CD4-positive, alpha-beta T cell (primary cell): ENCODE measurements at regions of chr18 and their contacts with region 1.

Region 1: GRCh38 chr18:45940724-45941123 is 26.4 kb downstream of the EPG5 start:
- DNase-seq: no peak
- ATAC-seq: no peak
- H3K4me3 ChIP-seq: no peak overlapping the region
- H3K4me3 Mint-ChIP-seq: no peak overlapping the region
- H3K27ac ChIP-seq: no peak overlapping the region
- H3K27ac Mint-ChIP-seq: no peak overlapping the region
- H3K4me1 ChIP-seq: peaks cover 11% of the 10 kb centered on the region
- H3K4me1 Mint-ChIP-seq: peaks cover 7% of the 10 kb centered on the region
- H3K27me3 ChIP-seq: no peaks in the 10 kb centered on the region
- H3K27me3 Mint-ChIP-seq: no peaks in the 10 kb centered on the region
- CTCF ChIP-seq: no peak

Region 2: GRCh38 chr18:45119876-45120275 is 820.8 kb before region 1 on chr18:
- CTCF ChIA-PET with region 1: no interaction called
- POLR2A ChIA-PET with region 1: no interaction called
- intact Hi-C with region 1: no loop called
- DNase-seq: no peak
- ATAC-seq: no peak
- H3K4me3 ChIP-seq: no peak overlapping the region
- H3K4me3 Mint-ChIP-seq: no peak overlapping the region
- H3K27ac ChIP-seq: no peak overlapping the region
- H3K27ac Mint-ChIP-seq: no peak overlapping the region
- H3K4me1 ChIP-seq: no peaks in the 10 kb centered on the region
- H3K4me1 Mint-ChIP-seq: no peaks in the 10 kb centered on the region
- H3K27me3 ChIP-seq: peaks cover 0 to 3% of the 10 kb centered on the region in 2 experiments
- H3K27me3 Mint-ChIP-seq: peaks cover 9% of the 10 kb centered on the region
- CTCF ChIP-seq: no peak

Region 3: GRCh38 chr18:45671336-45671735 is 269.4 kb before region 1 on chr18:
- CTCF ChIA-PET with region 1: no interaction called
- POLR2A ChIA-PET with region 1: no interaction called
- intact Hi-C with region 1: no loop called
- DNase-seq: no peak
- ATAC-seq: no peak
- H3K4me3 ChIP-seq: no peak overlapping the region
- H3K4me3 Mint-ChIP-seq: no peak overlapping the region
- H3K27ac ChIP-seq: no peak overlapping the region
- H3K27ac Mint-ChIP-seq: no peak overlapping the region
- H3K4me1 ChIP-seq: peaks cover 44% of the 10 kb centered on the region
- H3K4me1 Mint-ChIP-seq: peaks cover 51% of the 10 kb centered on the region
- H3K27me3 ChIP-seq: no peaks in the 10 kb centered on the region
- H3K27me3 Mint-ChIP-seq: no peaks in the 10 kb centered on the region
- CTCF ChIP-seq: no peak

Region 4: DNA sequence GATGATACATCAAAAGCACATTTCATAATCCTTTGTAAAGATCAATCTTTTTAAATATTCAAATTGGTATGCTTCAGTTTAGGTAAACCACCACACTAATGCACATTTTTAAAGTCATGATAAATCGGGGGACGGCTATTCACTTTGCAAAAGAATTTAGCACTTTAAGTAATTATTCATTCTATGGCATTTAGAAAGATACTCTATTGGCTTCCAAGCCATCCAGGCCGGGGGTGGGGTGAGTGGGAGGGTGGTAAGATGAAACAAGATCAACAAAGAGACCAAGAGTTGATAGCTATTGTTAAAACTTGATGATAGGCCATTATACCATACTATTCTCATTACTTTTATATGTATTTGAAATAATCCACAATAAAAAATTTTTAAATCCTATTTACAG is 14.6 kb before region 1 on chr18:
- CTCF ChIA-PET with region 1: no interaction called
- POLR2A ChIA-PET with region 1: no interaction called
- intact Hi-C with region 1: no loop called
- DNase-seq: no peak
- ATAC-seq: no peak
- H3K4me3 ChIP-seq: no peak overlapping the region
- H3K4me3 Mint-ChIP-seq: no peak overlapping the region
- H3K27ac ChIP-seq: no peak overlapping the region
- H3K27ac Mint-ChIP-seq: no peak overlapping the region
- H3K4me1 ChIP-seq: no peaks in the 10 kb centered on the region
- H3K4me1 Mint-ChIP-seq: peaks cover 5% of the 10 kb centered on the region
- H3K27me3 ChIP-seq: no peaks in the 10 kb centered on the region
- H3K27me3 Mint-ChIP-seq: no peaks in the 10 kb centered on the region
- CTCF ChIP-seq: no peak

Region 5: GRCh38 chr18:45954070-45954934 is 13.6 kb after region 1 on chr18:
- CTCF ChIA-PET with region 1: no interaction called
- POLR2A ChIA-PET with region 1: interaction called, 3 read pairs
- intact Hi-C with region 1: loop called in 1 of 2 experiments (anchors 2 kb)
- DNase-seq: no peak
- ATAC-seq: no peak
- H3K4me3 ChIP-seq: no peak overlapping the region
- H3K4me3 Mint-ChIP-seq: no peak overlapping the region
- H3K27ac ChIP-seq: no peak overlapping the region
- H3K27ac Mint-ChIP-seq: no peak overlapping the region
- H3K4me1 ChIP-seq: peaks cover 10% of the 10 kb centered on the region
- H3K4me1 Mint-ChIP-seq: peaks cover 37% of the 10 kb centered on the region
- H3K27me3 ChIP-seq: no peaks in the 10 kb centered on the region
- H3K27me3 Mint-ChIP-seq: no peaks in the 10 kb centered on the region
- CTCF ChIP-seq: no peak